ENCODE measurements at regions of chr10 and their contacts with region 1.

Region 1: GRCh38 chr10:31526681-31527080 is 207.7 kb downstream of the ZEB1 start:
- DNase-seq: no peak
- CTCF ChIP-seq: no peak

Region 2: DNA sequence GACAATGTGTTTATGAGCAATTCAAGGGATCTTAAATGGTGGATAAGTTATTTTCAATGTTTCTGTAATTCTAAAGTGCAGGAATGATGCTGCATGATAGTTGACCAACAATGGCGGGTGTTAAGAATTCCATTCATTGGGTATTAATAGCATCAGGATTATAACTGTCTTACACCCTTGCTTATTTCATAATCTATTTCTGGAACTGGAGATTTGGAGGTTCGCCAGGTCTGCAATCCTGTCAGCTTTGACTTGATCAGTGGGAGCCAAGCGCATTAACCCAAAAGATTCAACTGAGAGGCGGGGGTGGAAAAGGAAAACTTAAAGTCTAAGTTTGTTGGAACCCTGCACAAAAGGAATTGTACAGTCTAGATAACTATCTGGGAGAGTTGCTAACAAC is 322.6 kb before region 1 on chr10:
- CTCF ChIA-PET with region 1: no interaction called
- POLR2A ChIA-PET with region 1: no interaction called
- DNase-seq: no peak
- CTCF ChIP-seq: no peak

Region 3: DNA sequence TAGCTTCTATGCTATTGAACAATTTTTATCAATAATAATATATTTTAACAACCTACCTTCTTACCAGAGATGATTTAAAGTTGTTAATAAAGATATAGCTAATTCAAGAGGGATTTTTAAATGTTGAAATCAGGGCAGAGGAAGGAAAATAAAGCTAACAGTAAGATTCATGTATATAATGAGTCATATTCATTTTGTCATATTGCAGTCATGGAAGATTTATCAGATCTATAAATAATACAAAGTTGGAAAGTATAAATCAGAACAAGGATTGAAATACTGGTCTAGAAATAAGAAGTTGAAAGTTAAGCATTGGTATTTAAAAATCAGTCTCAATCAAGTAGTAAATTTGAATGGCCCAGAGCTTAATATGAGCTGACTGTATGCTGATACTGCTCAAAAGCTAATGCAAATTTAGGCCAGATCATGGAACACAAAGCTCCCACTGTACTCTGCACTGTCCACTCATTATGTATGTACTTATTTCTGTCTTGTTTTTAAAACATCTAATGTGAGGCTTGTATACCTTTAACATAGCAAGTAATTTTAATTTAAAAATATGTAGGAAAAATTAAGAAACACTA is 10.8 kb before region 1 on chr10:
- CTCF ChIA-PET with region 1: interaction called, 15 read pairs
- POLR2A ChIA-PET with region 1: no interaction called
- DNase-seq: no peak
- CTCF ChIP-seq: no peak